Activated B cell treated with CpG ODN at 0.5 μM for 24 hours (primary cell): ENCODE measurements at regions of chr7 and their contacts with region 1.

Region 1: GRCh38 chr7:55280031-55280454 is 85.1 kb upstream of the LANCL2 start:
- DNase-seq: no peak
- ATAC-seq: peak; percentile 69
- H3K4me3 Mint-ChIP-seq: no peak overlapping the region
- H3K27ac Mint-ChIP-seq: no peak overlapping the region
- H3K4me1 Mint-ChIP-seq: no peaks in the 10 kb centered on the region
- H3K27me3 Mint-ChIP-seq: no peaks in the 10 kb centered on the region
- CTCF ChIP-seq: no peak

Region 2: GRCh38 chr7:55415173-55415778 is 135.2 kb after region 1 on chr7:
- CTCF ChIA-PET with region 1: interaction called, 33 read pairs
- POLR2A ChIA-PET with region 1: no interaction called
- intact Hi-C with region 1: loop called (anchors 1 kb)
- DNase-seq: peak; percentile 55
- ATAC-seq: peak; percentile 99
- H3K4me3 Mint-ChIP-seq: no peak overlapping the region
- H3K27ac Mint-ChIP-seq: no peak overlapping the region
- H3K4me1 Mint-ChIP-seq: peaks cover 2% of the 10 kb centered on the region
- H3K27me3 Mint-ChIP-seq: no peaks in the 10 kb centered on the region
- CTCF ChIP-seq: no peak

Region 3: DNA sequence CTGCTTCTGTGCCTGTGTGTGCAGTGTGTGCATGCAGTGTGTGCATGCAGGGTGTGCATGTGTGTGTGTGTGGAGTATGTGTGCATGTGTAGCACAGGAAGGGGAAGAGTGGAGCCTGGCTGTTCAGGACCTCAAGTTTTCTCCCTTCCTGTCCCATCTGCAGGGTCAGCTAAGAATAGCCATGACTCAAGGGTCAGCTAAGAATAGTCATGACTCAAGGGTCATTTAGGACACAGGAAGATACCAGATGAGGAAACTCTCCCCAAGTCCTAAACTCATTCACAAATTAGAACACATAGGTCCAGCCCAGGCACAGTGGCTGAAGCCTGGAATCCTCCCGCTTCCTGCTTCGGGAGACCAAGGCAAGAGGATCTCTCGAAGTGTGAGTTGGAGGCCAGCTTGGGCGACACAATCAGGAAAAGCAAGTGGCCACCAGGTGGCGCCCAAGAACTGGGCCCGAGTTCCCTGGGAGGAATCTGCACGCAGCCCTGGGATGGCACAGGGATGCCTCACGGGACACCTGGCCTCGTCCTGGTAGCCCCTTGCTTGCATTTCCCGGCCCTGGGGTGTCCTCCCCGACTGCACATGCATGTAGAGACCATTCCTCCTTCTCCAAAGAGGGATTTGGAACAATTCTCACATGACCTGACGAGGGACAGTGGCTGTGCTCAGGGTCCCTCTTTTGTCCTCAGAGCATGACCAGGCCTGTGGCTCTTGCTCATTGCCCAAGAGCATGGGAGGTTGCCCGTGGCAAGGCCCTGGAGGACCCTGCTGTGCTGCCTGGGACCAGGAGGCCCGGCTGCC is 313.7 kb after region 1 on chr7:
- CTCF ChIA-PET with region 1: no interaction called
- POLR2A ChIA-PET with region 1: no interaction called
- intact Hi-C with region 1: loop called (anchors 1 kb)
- DNase-seq: peak; percentile 58
- ATAC-seq: no peak
- H3K4me3 Mint-ChIP-seq: no peak overlapping the region
- H3K27ac Mint-ChIP-seq: no peak overlapping the region
- H3K4me1 Mint-ChIP-seq: peaks cover 41% of the 10 kb centered on the region
- H3K27me3 Mint-ChIP-seq: no peaks in the 10 kb centered on the region
- CTCF ChIP-seq: no peak

Region 4: DNA sequence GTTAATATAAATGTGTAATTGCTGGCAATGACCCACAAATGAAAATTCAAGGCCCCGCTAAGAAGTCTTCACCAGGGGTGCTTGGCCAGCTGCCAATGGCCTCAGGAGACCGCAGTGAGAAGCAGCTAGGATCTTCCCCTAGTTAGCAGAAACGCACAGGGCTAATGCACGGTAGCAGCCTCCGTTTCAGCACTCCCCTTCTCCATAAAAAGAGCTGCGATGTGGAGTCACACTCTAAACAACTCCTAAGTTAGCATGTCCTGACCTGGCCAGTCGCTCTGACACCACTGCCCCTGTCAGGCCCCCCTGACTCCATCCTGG is 443.5 kb after region 1 on chr7:
- CTCF ChIA-PET with region 1: no interaction called
- POLR2A ChIA-PET with region 1: no interaction called
- intact Hi-C with region 1: loop called (anchors 10 kb)
- DNase-seq: no peak
- ATAC-seq: no peak
- H3K4me3 Mint-ChIP-seq: no peak overlapping the region
- H3K27ac Mint-ChIP-seq: no peak overlapping the region
- H3K4me1 Mint-ChIP-seq: no peaks in the 10 kb centered on the region
- H3K27me3 Mint-ChIP-seq: peaks cover 2% of the 10 kb centered on the region
- CTCF ChIP-seq: no peak

Region 5: DNA sequence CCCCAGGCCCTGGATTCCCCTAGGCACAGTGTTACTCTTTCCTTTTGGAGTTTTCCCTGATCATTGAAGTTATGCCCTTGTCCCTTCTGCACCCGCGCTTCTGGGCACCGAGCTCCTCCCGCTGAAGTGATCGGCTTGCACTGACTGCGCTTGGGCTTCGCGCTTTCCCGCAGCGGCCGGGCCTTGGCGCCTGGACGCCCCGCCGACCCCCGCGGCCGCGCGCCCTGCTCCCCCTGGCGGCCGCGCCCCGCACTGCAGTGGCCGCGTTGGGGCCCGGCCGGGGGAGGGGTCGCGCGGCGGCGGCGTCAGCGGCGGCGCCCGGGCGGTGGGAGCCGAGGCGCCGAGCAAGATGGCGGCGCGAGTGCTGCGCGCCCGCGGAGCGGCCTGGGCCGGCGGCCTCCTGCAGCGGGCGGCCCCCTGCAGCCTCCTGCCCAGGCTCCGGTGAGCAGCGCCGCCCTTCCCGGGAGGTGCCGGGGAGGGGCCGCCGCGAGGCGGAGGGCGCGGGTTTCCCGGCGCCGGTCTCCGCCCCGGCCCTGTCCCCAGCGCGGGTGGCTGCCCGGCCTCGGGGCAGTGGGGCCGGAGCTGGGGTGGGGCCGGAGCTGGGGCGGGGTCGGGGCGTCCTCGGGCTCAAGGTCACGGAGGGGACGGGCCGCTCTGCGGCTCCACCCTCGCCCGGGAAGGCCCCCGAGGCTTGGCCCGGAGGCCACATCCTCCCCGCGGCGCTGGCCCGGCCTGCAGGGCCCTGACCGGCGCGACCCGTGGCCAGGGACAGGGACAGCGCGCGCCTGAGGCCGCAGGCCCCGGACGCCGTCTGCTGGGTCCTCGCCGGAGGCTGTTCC is 684.4 kb after region 1 on chr7 and contains the start of gene NIPSNAP2:
- CTCF ChIA-PET with region 1: interaction called, 3 read pairs
- POLR2A ChIA-PET with region 1: no interaction called
- intact Hi-C with region 1: loop called (anchors 1 kb)
- DNase-seq: peak; percentile 79
- ATAC-seq: peak; percentile 88
- H3K4me3 Mint-ChIP-seq: peak within 1 kb of the TSS; percentile 86
- H3K27ac Mint-ChIP-seq: peak within 1 kb of the TSS; percentile 88
- H3K4me1 Mint-ChIP-seq: peaks cover 25% of the 10 kb centered on the region
- H3K27me3 Mint-ChIP-seq: no peaks in the 10 kb centered on the region
- CTCF ChIP-seq: no peak
- total RNA-seq, gene NIPSNAP2: 33.7 and 43.8 TPM in 2 replicates

Region 6: DNA sequence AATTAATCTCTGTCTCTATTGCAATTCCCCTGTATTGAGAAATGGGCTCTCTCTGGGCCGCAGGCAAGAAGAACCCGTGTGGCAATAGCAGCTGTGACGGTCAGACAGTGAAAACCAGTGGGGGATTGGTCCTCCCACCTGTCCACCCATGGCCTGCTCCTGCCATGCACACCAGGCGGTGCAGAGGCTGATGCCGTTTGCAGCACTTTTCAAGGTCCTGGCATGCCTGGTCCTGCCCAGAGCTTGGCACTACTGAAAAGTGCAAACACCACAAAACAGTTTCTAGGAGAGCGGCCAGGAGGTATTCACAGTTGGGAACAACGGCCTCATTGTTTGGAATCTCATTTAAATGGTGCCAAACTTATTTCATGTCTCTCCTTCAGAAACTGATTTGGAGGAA is 729.7 kb after region 1 on chr7:
- CTCF ChIA-PET with region 1: no interaction called
- POLR2A ChIA-PET with region 1: no interaction called
- intact Hi-C with region 1: loop called (anchors 5 kb)
- DNase-seq: no peak
- ATAC-seq: no peak
- H3K4me3 Mint-ChIP-seq: no peak overlapping the region
- H3K27ac Mint-ChIP-seq: no peak overlapping the region
- H3K4me1 Mint-ChIP-seq: no peaks in the 10 kb centered on the region
- H3K27me3 Mint-ChIP-seq: no peaks in the 10 kb centered on the region
- CTCF ChIP-seq: no peak

Region 7: GRCh38 chr7:56074371-56074791 is 794.3 kb after region 1 on chr7:
- CTCF ChIA-PET with region 1: interaction called, 4 read pairs
- POLR2A ChIA-PET with region 1: no interaction called
- intact Hi-C with region 1: loop called (anchors 1 kb)
- DNase-seq: peak; percentile 64
- ATAC-seq: peak; percentile 94
- H3K4me3 Mint-ChIP-seq: no peak overlapping the region
- H3K27ac Mint-ChIP-seq: no peak overlapping the region
- H3K4me1 Mint-ChIP-seq: peaks cover 4% of the 10 kb centered on the region
- H3K27me3 Mint-ChIP-seq: no peaks in the 10 kb centered on the region
- CTCF ChIP-seq: no peak